Activated CD4-positive, alpha-beta memory T cell treated with anti-CD3 and anti-CD28 coated beads for 36 hours (primary cell): ENCODE measurements at regions of chr19 and their contacts with region 1.

Region 1: DNA sequence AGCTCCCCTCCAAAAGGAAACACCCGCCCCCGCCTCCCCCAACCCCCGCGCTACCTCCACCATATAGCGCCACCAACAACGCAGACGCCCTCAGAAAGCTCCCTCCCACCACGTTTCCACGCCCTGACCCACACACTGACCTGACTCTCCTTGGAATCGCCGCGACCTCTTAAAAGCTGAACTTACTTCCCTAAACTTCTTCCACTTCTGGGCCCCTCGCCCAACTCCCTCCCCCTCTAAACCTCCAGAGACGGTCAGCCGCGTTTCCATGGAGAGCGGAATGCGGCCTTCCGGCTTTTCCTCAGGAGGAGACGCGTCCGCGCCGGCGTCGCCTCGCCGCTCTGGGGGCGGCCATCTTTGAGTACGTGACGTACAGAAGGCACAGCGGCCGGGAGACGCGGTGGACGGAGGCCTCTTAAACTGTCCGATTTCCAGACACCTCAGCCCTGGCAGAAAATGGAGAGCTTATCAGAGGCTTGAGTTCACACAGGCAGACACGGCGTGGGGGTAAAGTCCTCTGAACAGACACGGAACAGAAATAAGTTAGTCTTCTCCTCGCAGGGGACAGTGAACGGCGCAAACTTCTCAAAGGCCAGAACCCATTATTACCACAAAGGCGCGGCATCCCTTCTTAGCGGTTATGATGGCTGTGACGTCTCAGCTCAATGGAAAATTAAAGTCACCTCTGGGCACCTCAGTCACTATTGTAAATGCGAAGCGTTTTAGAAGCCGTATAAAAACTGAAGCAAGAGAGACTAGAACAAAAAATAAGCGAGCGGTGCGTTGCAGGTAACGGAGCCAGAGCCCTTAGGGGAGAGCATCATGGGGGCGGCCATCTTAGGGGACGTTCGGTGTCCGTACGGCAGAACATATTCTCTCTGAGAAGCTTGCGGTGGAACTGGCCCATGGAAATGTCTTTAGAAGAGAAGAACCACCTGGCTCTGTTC is at the start of gene ZNF432:
- DNase-seq: peak; percentile 87
- H3K4me3 Mint-ChIP-seq: peak within 1 kb of the TSS; percentile 92
- H3K27ac Mint-ChIP-seq: peak within 1 kb of the TSS; percentile 97
- H3K4me1 Mint-ChIP-seq: peaks cover 13% of the 10 kb centered on the region
- H3K27me3 Mint-ChIP-seq: no peaks in the 10 kb centered on the region
- total RNA-seq, gene ZNF432: 8.3 to 8.8 TPM

Region 2: GRCh38 chr19:51703575-51704515 is 345.0 kb before region 1 on chr19:
- CTCF ChIA-PET with region 1: no interaction called
- POLR2A ChIA-PET with region 1: no interaction called
- intact Hi-C with region 1: no loop called
- DNase-seq: peak; percentile 97
- H3K4me3 Mint-ChIP-seq: peak overlapping the region; percentile 92
- H3K27ac Mint-ChIP-seq: peak overlapping the region; percentile 89
- H3K4me1 Mint-ChIP-seq: peaks cover 32% of the 10 kb centered on the region
- H3K27me3 Mint-ChIP-seq: peaks cover 2% of the 10 kb centered on the region

Region 3: DNA sequence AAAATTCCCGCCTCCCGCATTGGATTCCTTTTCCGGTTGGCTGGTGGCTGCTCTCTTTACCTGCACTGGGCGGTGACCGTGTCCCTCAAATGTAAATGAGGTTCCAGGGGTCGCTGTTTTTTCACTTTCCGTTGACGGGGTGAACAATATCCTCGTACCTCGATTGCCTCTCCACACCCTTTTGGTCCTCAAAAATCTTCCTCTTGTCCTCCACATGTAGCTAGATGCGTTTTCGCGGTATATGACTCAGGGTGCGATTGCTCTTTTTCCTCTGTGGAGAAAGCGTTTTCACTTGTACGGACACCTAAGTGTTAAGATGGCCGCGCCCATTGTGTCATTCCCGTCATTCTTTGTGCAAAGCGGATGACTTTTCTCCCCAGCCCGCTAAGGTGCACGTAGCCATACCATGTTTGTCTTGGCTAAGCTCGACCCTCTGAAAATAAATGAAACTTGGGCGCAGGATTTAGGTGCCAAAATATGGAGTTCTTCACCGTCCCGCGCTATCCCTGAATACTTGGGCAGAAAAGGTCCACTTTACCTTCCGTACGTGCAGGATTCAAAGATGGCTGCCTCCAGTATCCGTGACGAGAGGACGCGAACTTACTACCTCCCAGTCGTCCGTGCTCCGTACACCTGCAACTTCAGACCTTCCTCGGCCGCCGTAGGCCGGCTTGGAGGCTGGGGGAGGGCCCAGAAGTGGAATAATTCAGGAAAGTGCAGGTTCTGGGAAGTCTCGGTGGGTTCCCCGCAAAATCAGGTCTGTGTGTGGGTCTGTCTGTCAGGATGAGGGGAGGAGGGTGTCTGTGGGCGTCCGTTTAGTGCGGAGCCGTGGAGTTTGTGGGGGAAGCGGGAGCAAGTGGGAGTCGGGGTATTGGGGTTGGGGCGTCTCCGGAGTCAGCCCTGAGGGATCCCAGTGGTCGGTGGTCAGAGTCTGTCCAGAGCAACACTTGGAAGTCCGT is 121.8 kb before region 1 on chr19 and contains the start of gene ZNF613:
- CTCF ChIA-PET with region 1: no interaction called
- POLR2A ChIA-PET with region 1: no interaction called
- intact Hi-C with region 1: loop called (anchors 2 kb)
- DNase-seq: peak; percentile 90
- H3K4me3 Mint-ChIP-seq: peak within 1 kb of the TSS; percentile 92
- H3K27ac Mint-ChIP-seq: peak within 1 kb of the TSS; percentile 97
- H3K4me1 Mint-ChIP-seq: peaks cover 20% of the 10 kb centered on the region
- H3K27me3 Mint-ChIP-seq: no peaks in the 10 kb centered on the region
- total RNA-seq, gene ZNF613: 3.2 to 4.6 TPM

Region 4: GRCh38 chr19:51959791-51960190 is 89.0 kb before region 1 on chr19:
- CTCF ChIA-PET with region 1: no interaction called
- POLR2A ChIA-PET with region 1: no interaction called
- intact Hi-C with region 1: no loop called
- DNase-seq: no peak
- H3K4me3 Mint-ChIP-seq: no peak overlapping the region
- H3K27ac Mint-ChIP-seq: no peak overlapping the region
- H3K4me1 Mint-ChIP-seq: no peaks in the 10 kb centered on the region
- H3K27me3 Mint-ChIP-seq: no peaks in the 10 kb centered on the region

Region 5: GRCh38 chr19:51986309-51987291 is 62.2 kb before region 1 on chr19 and contains the start of gene ZNF350:
- CTCF ChIA-PET with region 1: no interaction called
- POLR2A ChIA-PET with region 1: no interaction called
- intact Hi-C with region 1: loop called (anchors 5 kb)
- DNase-seq: peak; percentile 94
- H3K4me3 Mint-ChIP-seq: peak within 1 kb of the TSS; percentile 89
- H3K27ac Mint-ChIP-seq: peak within 1 kb of the TSS; percentile 87
- H3K4me1 Mint-ChIP-seq: peaks cover 12% of the 10 kb centered on the region
- H3K27me3 Mint-ChIP-seq: no peaks in the 10 kb centered on the region
- total RNA-seq, gene ZNF350: 6.9 to 8.1 TPM

Region 6: GRCh38 chr19:52028027-52028779 is 20.6 kb before region 1 on chr19 and contains the start of gene ZNF614:
- CTCF ChIA-PET with region 1: no interaction called
- POLR2A ChIA-PET with region 1: interaction called, 8 read pairs
- intact Hi-C with region 1: loop called (anchors 1 kb)
- DNase-seq: peak; percentile 92
- H3K4me3 Mint-ChIP-seq: peak within 1 kb of the TSS; percentile 83
- H3K27ac Mint-ChIP-seq: peak within 1 kb of the TSS; percentile 87
- H3K4me1 Mint-ChIP-seq: peaks cover 10% of the 10 kb centered on the region
- H3K27me3 Mint-ChIP-seq: no peaks in the 10 kb centered on the region
- total RNA-seq, gene ZNF614: 7.2 TPM

Region 7: GRCh38 chr19:52070476-52070875 is 21.6 kb after region 1 on chr19:
- CTCF ChIA-PET with region 1: no interaction called
- POLR2A ChIA-PET with region 1: no interaction called
- intact Hi-C with region 1: no loop called
- DNase-seq: no peak
- H3K4me3 Mint-ChIP-seq: no peak overlapping the region
- H3K27ac Mint-ChIP-seq: no peak overlapping the region
- H3K4me1 Mint-ChIP-seq: no peaks in the 10 kb centered on the region
- H3K27me3 Mint-ChIP-seq: no peaks in the 10 kb centered on the region

Region 8: DNA sequence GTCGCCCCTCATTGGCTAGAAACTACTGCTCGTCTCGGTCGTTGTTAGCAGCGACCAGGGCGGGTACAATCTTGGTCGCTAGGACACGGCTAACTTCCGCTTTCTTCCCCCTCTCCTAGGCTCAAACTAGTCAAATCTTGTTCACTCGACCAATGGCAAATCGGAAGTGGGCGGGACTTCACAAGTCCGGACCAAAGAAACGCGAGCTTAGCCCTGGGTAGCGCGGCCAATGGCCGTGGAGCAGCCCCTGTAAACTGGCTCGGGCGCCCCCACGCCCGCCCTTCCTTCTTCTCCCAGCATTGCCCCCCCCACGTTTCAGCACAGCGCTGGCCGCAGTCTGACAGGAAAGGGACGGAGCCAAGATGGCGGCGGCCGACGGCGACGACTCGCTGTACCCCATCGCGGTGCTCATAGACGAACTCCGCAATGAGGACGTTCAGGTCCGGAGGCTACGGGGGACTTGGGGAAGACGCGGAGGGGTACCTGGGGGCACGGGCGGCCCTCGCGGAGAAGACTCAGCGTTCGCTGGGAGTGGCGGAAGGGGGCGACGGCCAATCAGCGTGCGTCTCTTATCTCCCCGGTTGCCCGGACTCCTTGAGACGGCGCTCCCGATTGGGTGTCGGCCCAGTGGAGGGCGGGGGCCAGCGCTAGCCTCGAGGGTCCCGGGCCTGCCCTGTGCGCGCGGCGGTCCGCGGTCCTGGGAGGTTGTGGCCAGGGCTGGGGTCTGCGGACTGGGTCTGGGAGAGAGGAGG is 141.1 kb after region 1 on chr19 and contains the start of gene PPP2R1A:
- CTCF ChIA-PET with region 1: no interaction called
- POLR2A ChIA-PET with region 1: no interaction called
- intact Hi-C with region 1: loop called (anchors 1 kb)
- DNase-seq: peak; percentile 98
- H3K4me3 Mint-ChIP-seq: peak within 1 kb of the TSS; percentile 96
- H3K27ac Mint-ChIP-seq: peak within 1 kb of the TSS; percentile 99
- H3K4me1 Mint-ChIP-seq: peaks cover 41% of the 10 kb centered on the region
- H3K27me3 Mint-ChIP-seq: no peaks in the 10 kb centered on the region
- total RNA-seq, gene PPP2R1A: 224 to 229 TPM

Region 9: GRCh38 chr19:52258426-52258825 is 209.6 kb after region 1 on chr19:
- CTCF ChIA-PET with region 1: no interaction called
- POLR2A ChIA-PET with region 1: no interaction called
- intact Hi-C with region 1: no loop called
- DNase-seq: no peak
- H3K4me3 Mint-ChIP-seq: no peak overlapping the region
- H3K27ac Mint-ChIP-seq: no peak overlapping the region
- H3K4me1 Mint-ChIP-seq: no peaks in the 10 kb centered on the region
- H3K27me3 Mint-ChIP-seq: no peaks in the 10 kb centered on the region

Region 10: DNA sequence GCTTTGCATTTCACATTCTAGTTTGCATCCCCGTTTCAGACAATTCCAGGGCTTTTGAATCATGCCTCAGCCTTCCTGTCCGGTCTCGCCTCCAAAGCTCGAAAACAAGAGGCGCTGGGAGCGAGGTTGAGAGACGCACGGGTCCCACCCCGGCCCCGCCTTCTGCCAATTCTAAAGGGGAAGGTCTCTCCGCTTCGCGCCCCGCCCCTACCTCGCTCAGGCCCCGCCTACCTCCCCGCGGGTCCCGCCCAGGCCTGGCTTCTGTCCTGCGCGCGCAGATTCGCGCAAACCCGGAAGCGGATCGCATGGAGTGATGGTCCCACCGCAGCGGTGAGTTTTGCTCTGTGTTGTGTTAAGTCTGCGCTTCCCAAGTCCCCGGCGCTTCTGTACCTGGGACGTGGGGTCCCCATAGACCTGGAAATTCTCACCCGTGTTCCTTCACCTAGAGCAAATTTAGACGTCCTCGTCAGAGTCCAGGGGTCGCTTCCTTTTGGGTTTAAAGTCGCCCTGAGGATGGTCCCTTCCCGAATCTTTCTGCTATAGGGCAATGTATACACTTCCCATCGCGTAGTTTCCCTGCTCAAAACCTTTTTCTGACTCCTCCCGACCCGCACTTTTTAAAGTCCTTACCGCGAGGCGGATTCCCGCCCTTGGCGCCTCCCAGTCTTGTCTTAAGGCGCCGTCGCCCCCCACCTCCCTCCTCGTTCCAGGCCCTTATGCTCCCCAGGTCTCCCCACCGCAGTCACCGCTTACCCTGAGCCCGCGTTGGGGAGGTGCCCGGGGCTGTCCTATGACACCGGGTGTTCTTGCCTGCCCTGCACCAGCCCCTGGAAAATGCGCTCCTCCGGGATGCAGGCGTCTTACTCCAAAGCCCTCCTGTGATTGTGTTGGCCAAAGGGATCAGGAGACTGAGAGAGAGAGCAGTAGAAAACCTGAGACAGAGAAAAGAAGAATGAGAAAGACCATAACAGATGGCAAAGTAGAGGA is 1284.9 kb after region 1 on chr19 and contains the start of gene ZNF845:
- CTCF ChIA-PET with region 1: interaction called, 6 read pairs
- POLR2A ChIA-PET with region 1: no interaction called
- intact Hi-C with region 1: loop called (anchors 5 kb)
- DNase-seq: peak; percentile 98
- H3K4me3 Mint-ChIP-seq: peak within 1 kb of the TSS; percentile 94
- H3K27ac Mint-ChIP-seq: peak within 1 kb of the TSS; percentile 87
- H3K4me1 Mint-ChIP-seq: peaks cover 11% of the 10 kb centered on the region
- H3K27me3 Mint-ChIP-seq: peaks cover 7% of the 10 kb centered on the region
- total RNA-seq, gene ZNF845: 5.7 to 5.8 TPM